ENCODE measurements at regions of chr17 and their contacts with region 1.

Region 1: DNA sequence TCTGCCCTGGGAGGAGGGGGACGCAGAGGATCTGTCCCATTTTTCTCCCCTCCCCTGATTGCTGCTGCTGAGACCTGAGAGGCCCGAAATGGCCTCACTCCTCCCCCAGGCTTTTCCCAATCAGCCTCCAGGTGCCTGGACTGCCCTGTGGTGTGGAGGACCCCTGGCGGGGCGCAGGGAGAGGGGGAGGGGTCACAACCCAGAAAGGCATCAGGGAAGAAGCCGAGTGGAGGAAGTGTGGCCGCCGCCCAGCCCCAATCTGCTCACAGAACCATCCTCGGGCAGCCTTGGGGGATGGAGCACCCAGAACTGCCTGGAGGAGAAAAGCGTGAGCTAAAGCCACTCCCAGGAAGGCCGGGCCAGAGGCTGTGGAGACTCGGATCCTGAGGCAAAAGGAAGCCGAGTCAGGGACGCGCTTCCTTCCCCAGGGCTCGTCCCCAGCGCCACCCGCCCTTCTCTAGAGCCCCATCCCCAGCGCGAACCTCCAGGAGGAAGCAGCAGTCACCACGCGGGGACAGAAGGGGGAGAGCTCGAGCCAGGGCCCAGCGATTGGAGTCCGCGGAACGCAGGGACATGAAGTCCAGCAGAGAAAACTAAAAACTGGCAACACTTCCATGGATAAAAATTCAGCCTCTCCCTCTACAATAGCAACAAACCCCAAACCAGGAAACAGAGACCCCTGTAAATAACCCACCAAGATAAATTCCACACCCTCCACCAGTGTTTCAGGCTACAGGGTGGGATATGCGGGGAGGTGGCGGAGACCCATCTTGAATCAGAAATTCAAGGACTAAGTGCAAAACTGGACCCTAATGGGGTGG is 116.3 kb upstream of the METRNL start:
- DNase-seq: peak; percentile 76
- H3K4me3 ChIP-seq: no peak overlapping the region
- H3K27ac ChIP-seq: no peak overlapping the region
- H3K4me1 ChIP-seq: peaks cover 9% of the 10 kb centered on the region
- H3K27me3 ChIP-seq: no peaks in the 10 kb centered on the region
- CTCF ChIP-seq: peak; percentile 72 to 91
- POLR2A ChIP-seq: no peak

Region 2: DNA sequence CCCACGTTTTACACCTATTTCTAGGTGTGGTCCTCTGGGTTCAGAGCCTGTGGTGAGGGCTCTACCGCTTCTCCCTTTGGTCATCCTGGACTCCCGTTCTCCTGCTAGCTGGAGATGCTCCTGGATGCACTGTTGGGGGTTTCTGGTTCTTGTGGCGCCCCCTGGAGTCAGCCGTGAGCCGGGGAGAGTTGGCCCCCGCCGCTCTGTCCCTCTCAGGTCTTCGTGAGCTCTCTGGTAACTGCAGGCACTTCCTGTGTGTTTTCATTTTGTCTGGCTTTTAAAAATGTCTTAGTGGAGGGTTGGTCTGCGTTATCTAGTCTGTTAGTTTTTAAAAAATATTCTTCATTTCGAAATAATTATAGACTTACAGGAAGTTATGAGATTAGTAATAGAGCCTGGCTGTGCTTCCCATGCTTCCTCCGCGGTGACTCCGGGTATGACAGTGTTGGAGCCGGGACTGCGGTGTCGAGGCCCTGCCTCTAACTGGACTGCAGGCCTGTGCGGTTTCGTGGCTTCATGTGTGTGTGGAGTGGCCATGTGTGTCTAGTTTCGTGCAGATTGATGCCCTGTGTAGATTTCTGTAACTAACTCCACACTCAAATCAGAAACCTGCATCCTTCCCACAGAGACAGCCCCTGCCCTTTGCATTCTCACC is 45.3 kb before region 1 on chr17:
- CTCF ChIA-PET with region 1: no interaction called
- POLR2A ChIA-PET with region 1: no interaction called
- dilution Hi-C with region 1: no loop called
- intact Hi-C with region 1: loop called (anchors 2 kb)
- DNase-seq: peak; percentile 21
- H3K4me3 ChIP-seq: no peak overlapping the region
- H3K27ac ChIP-seq: no peak overlapping the region
- H3K4me1 ChIP-seq: no peaks in the 10 kb centered on the region
- H3K27me3 ChIP-seq: no peaks in the 10 kb centered on the region
- CTCF ChIP-seq: peak; percentile 41 to 65
- POLR2A ChIP-seq: no peak

Region 3: GRCh38 chr17:83051395-83052233 is 88.5 kb after region 1 on chr17:
- CTCF ChIA-PET with region 1: interaction called, 4 read pairs
- POLR2A ChIA-PET with region 1: no interaction called
- dilution Hi-C with region 1: no loop called
- intact Hi-C with region 1: loop called (anchors 1 kb)
- DNase-seq: peak; percentile 98
- H3K4me3 ChIP-seq: peak overlapping the region; percentile 3 to 39 (median 18)
- H3K27ac ChIP-seq: peak overlapping the region; percentile 18
- H3K4me1 ChIP-seq: peaks cover 28% of the 10 kb centered on the region
- H3K27me3 ChIP-seq: no peaks in the 10 kb centered on the region
- CTCF ChIP-seq: no peak
- POLR2A ChIP-seq: peak; percentile 86

Region 4: DNA sequence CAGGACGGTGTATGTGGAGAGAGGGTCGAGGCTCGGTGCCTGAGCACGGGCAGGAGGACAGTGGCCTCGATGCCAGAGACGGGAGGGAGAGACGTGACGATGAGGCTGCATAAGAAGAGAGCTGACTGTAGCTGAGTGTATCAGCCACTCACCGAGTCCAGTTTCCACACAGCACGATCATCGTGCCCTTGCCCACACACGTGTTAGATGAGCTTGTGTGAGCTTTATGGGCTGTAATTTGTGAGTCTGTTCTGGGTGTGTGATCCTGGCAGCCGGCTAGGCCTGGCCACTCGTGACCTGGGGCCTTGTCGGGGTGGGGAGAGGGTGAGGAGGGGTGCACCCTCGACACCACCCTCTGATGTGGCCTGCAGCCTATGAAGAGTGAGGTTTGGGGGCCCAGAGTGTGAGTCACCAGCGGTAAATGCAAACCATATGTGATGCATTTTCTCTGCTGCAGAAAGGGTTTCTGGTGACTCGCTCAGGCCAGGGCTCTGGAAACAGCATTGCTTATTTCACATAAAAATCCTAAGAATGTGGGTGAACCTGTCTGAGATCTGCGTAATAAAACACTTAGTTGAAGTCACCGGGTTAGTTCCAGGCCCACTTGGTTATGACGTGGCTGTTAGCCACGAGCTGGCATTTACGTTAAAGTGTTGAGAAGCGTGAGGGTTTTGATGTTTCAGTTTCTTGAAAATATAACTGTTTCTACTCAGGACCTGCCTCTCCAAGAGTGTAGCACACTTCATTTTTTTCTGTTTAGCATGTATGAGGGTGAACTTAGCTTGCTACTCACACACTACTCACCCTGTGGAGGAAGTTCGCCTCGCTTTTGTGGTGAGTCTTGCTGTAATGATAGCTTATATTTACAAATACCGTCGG is 120.5 kb after region 1 on chr17:
- CTCF ChIA-PET with region 1: interaction called, 3 read pairs
- POLR2A ChIA-PET with region 1: no interaction called
- dilution Hi-C with region 1: no loop called
- intact Hi-C with region 1: loop called (anchors 5 kb)
- DNase-seq: peak; percentile 51
- H3K4me3 ChIP-seq: no peak overlapping the region
- H3K27ac ChIP-seq: no peak overlapping the region
- H3K4me1 ChIP-seq: peaks cover 19% of the 10 kb centered on the region
- H3K27me3 ChIP-seq: no peaks in the 10 kb centered on the region
- CTCF ChIP-seq: no peak
- POLR2A ChIP-seq: no peak

Region 5: DNA sequence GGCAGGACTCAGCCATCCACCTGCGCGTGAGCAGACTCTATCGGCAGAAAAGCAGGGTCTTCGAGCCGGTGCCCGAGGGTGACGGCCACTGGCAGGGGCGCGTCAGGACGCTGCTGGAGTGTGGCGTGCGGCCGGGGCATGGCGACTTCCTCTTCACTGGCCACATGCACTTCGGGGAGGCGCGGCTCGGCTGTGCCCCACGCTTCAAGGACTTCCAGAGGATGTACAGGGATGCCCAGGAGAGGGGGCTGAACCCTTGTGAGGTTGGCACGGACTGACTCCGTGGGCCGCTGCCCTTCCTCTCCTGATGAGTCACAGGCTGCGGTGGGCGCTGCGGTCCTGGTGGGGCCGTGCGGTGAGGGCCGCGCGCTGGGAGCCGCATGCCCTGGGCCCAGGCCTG is 131.2 kb after region 1 on chr17:
- CTCF ChIA-PET with region 1: no interaction called
- POLR2A ChIA-PET with region 1: no interaction called
- dilution Hi-C with region 1: no loop called
- intact Hi-C with region 1: no loop called
- DNase-seq: no peak
- H3K4me3 ChIP-seq: no peak overlapping the region
- H3K27ac ChIP-seq: no peak overlapping the region
- H3K4me1 ChIP-seq: peaks cover 3% of the 10 kb centered on the region
- H3K27me3 ChIP-seq: no peaks in the 10 kb centered on the region
- CTCF ChIP-seq: no peak
- POLR2A ChIP-seq: no peak